G401 (cell line): ENCODE measurements at regions of chr12 and their contacts with region 1.

Region 1: GRCh38 chr12:64256166-64256800 is 34.2 kb upstream of the KICS2 start:
- DNase-seq: peak; percentile 69

Region 2: DNA sequence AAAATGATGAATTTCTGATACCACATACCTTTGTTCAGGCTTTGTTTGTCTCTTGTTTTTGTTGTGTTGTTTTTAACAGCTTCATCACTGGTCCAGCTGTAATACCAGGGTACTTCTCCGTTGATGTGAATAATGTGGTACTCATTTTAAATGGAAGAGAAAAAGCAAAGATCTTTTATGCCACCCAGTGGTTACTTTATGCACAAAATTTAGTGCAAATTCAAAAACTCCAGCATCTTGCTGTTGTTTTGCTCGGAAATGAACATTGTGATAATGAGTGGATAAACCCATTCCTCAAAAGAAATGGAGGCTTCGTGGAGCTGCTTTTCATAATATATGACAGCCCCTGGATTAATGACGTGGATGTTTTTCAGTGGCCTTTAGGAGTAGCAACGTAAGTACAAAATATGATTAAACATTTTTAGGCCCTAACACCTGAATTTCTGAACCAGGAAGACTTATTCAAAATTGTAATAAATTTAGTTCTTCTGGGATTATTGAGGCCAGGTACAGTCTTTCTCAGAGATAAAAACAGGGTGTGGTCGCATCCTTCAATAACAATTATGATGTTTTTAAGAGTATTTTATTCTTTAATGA is 454.2 kb before region 1 on chr12:
- in situ Hi-C with region 1: loop called (anchors 25 kb)
- DNase-seq: peak; percentile 49

Region 3: GRCh38 chr12:64088431-64089349 is 167.6 kb before region 1 on chr12:
- in situ Hi-C with region 1: no loop called
- DNase-seq: no peak

Region 4: GRCh38 chr12:64212119-64212746 is 44.0 kb before region 1 on chr12:
- in situ Hi-C with region 1: no loop called
- DNase-seq: no peak

Region 5: DNA sequence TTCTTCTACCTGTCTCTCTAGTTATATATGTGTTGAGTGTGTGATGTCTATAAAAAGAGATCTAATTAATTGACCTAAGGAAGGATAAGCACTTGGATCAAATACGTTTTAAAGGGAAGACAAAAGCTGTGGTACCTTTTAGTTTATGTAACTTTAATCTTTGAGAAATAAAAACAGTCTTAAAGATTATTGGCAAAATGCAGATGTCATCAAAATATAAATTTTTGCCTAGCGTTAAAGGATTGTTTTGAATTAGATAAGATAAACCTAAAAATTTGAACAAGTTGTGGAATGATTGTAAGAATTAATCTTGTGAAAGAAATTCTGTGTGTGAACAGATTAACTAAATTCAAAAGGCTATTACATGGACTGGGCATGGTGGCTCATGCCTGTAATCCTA is 91.3 kb after region 1 on chr12:
- in situ Hi-C with region 1: no loop called
- DNase-seq: no peak